Prostate gland (tissue), 2 donors: ENCODE measurements at regions of chr18 and their contacts with region 1.

Region 1: DNA sequence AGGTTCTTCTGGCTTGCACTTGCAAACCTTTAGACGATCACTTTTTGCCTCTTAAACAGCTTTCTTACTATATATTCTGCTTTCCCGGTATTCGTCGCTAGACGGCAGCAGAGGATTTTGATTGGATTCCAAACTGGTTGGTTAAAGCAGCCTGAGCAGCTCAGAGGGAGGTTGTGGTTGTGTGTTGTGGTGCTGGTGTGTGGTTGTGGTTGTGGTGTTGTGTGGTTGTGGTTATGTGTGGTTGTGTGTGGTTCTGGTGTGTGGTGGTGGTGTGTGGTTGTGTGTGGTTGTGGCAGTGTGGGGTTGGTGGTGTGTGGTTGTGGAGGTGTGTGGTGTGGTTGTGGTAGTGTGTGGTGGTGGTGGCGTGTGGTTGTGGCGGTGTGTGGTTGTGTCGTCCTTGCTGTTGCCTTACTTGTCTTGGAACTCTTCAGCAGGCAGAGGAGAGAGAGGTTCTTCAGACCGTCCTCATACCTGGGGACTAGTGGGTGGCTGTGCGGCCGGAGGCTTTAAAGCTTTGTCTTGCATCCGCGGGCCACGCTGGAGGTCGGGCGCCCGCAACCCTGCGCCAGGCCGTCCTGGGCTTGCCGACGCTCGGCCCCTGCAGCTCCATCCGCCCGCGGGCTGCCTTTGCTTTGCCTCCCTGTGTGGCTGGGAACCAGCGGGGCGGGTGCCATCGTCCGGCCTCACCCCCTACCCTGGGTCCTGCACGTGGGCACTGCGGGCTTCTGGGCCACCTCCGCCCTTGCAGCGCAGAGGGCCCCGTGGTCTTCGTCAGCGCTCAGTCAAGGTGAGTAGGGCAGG is 190.8 kb downstream of the ARHGAP28 start:
- DNase-seq: peak; percentile 73
- H3K4me3 ChIP-seq: no peak overlapping the region
- H3K27ac ChIP-seq: no peak overlapping the region
- H3K4me1 ChIP-seq: no peaks in the 10 kb centered on the region
- H3K27me3 ChIP-seq: no peaks in the 10 kb centered on the region
- CTCF ChIP-seq: peak; percentile 34 to 79 (median 70)
- POLR2A ChIP-seq: no peak

Region 2: GRCh38 chr18:6874316-6874715 is 46.0 kb before region 1 on chr18:
- intact Hi-C with region 1: no loop called
- DNase-seq: no peak
- H3K4me3 ChIP-seq: no peak overlapping the region
- H3K27ac ChIP-seq: no peak overlapping the region
- H3K4me1 ChIP-seq: no peaks in the 10 kb centered on the region
- H3K27me3 ChIP-seq: no peaks in the 10 kb centered on the region
- CTCF ChIP-seq: no peak
- POLR2A ChIP-seq: no peak

Region 3: GRCh38 chr18:7000484-7001096 is 80.3 kb after region 1 on chr18:
- intact Hi-C with region 1: loop called (anchors 5 kb)
- DNase-seq: peak; percentile 37
- H3K4me3 ChIP-seq: no peak overlapping the region
- H3K27ac ChIP-seq: peak overlapping the region; percentile 34 to 47
- H3K4me1 ChIP-seq: peaks cover 2% of the 10 kb centered on the region
- H3K27me3 ChIP-seq: no peaks in the 10 kb centered on the region
- CTCF ChIP-seq: peak; percentile 10 to 69 (median 58)
- POLR2A ChIP-seq: no peak

Region 4: GRCh38 chr18:7177116-7177744 is 256.9 kb after region 1 on chr18:
- intact Hi-C with region 1: loop called (anchors 5 kb)
- DNase-seq: peak; percentile 47
- H3K4me3 ChIP-seq: no peak overlapping the region
- H3K27ac ChIP-seq: no peak overlapping the region
- H3K4me1 ChIP-seq: no peaks in the 10 kb centered on the region
- H3K27me3 ChIP-seq: no peaks in the 10 kb centered on the region
- CTCF ChIP-seq: peak; percentile 14 to 72 (median 55)
- POLR2A ChIP-seq: no peak